Posterior cingulate gyrus (tissue), 11 donors: ENCODE measurements at regions of chr3 and their contacts with region 1.

Region 1: DNA sequence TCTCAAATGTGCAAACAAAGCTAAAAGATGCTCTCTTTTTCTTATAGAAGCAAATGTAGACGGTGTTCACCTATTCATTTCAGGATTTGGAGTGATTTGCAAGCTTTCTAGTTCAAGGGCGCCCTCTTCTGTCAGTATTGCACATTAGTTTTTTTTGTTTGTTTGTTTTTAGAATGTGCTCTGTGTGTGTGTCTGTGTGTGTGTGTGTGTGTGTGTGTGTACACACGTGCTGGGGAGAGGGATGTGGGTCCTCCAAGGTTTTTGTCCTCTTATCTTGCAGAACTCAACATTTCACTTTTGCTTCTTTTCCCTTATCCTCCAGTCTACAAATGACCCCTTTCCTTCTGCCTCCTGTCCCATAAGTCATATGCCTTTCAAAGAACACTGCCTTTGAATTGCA is 23.5 kb downstream of the DNAH1 start:
- DNase-seq: peak in 2 of 10 donors; percentile 6 to 23

Region 2: DNA sequence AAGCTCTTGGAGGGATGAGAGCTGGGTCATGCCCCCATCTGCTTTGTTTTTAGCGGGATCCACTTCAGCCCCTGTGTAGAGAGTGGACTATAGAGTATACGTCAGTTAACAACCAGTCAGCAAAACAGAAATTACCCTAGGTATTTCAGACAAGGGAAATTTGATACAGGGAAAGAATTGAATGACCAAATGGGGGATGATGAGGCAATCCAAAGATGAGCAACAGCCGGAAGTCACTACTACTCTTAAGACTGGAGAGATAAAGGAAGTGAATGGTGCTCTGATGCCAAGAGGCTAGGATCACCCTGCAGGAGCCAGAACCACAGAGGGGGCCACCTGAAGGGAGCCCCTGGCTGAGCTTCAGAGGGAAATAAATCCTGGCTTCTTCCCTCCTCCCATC is 386.2 kb before region 1 on chr3:
- intact Hi-C with region 1: no loop called
- DNase-seq: no peak

Region 3: DNA sequence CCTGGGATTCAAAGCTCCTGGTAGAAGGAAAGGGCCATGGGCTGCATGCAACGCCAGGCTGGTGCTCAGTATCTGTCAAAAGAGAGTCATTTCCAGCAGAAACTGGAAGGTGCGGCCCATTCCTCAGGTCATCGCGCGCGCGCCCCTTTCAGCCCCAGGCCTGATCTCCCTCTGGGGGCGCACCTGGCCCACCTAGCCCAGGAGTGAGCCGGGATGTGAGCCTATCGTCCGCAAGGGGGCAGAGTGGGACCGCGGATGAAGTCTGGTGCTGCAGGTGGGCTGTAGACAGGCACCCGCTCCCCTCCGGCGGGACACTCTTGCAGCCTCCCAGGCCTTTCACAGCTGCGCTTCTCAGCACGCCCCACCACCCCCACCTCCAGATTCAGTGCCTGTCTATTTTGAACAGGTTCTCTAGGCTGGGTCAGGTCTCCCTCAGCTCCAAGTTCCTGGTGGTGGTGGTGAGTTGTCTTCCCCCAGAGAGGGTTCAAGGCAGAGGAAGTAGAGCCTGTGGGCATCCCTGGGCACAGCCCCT is 338.1 kb before region 1 on chr3:
- intact Hi-C with region 1: loop called (anchors 5 kb)
- DNase-seq: peak; percentile 62 to 97 (median 82)

Region 4: DNA sequence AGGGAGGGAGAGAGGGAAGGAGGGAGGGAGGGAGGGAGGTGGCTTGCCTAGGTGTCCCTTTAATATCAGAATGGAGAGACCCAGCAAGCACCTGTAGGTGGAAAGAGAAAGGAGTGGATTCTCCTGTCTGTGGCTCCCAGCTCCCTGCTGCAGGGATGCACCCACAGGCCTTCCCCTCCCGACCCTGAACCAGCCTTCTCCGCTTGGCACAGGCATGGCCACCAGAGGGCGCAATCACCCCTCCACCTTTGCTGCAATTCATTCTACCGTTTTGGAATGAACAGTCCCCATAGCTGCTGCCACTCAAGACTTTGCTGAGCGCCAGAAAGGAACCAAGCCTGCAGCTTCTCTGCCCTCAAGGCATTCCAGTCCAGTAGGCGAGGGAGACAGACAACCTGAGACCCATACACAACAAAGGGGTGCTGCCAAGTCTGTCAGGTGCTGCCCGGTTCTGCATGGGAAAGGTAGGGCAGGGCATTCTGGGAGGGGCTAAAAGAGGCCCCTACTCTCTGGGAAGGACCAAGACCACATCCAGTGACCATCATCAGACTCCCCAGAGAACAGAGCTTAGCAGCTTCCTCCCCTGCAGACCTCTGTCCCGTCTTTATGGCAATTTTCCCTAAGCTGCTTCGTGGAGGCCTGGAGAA is 119.1 kb before region 1 on chr3:
- intact Hi-C with region 1: loop called (anchors 5 kb)
- DNase-seq: peak; percentile 67 to 97 (median 90)

Region 5: DNA sequence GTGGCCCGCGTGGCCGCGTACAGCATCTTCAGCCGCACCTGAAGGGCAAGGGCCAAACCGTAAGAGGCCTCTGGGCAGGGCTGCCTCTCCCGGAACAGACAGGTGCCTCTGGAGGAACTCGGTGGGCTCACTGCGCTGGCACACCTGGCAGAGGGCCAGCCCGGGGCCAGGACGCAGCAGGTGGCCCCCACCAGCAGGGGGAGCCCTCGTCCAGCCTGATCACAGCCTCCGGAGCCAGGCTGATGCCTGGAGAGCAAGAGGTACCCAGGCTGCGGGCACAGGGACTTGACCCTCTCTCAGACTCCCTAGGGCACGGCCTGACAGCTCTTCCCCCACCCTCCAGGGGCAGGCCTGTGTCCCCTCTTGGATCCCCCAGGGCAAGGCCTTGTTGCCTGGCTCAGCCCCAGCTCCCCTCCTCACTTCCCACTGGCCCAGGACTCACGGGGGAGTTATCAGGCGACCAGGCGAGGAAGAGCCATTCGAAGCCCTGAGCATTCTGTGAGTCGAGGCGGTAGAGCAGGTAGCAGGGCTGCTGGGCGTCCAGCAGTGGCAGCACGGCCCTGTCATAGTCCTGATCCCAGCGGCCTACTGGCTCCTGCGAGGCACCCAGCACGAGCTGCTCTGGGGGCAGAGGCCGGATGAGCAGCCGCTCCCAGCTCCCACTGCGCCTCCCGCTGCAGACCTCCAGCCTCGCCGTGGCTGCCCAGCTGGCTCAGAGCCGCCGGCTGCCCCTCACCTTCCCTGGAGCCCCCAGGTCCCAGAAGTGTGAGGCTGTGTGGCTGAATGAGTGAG is 107.9 kb before region 1 on chr3:
- intact Hi-C with region 1: loop called (anchors 5 kb)
- DNase-seq: peak in 6 of 10 donors; percentile 51 to 94 (median 74)

Region 6: GRCh38 chr3:52291508-52292181 is 48.0 kb before region 1 on chr3:
- intact Hi-C with region 1: loop called (anchors 5 kb)
- DNase-seq: peak in 4 of 10 donors; percentile 31 to 83 (median 72)

Region 7: GRCh38 chr3:52428151-52429005 is 88.8 kb after region 1 on chr3:
- intact Hi-C with region 1: no loop called
- DNase-seq: peak in 7 of 10 donors; percentile 55 to 87 (median 65)